PC-3 (cell line): ENCODE measurements at regions of chr11 and their contacts with region 1.

Region 1: GRCh38 chr11:64916775-64917662 is at the start of gene ATG2A:
- DNase-seq: peak; percentile 100
- ATAC-seq: peak; percentile 97
- H3K4me3 ChIP-seq: peak within 1 kb of the TSS; percentile 89
- H3K27ac ChIP-seq: peak within 1 kb of the TSS; percentile 9
- H3K4me1 ChIP-seq: peaks cover 15% of the 10 kb centered on the region
- H3K27me3 ChIP-seq: no peaks in the 10 kb centered on the region
- CTCF ChIP-seq: no peak
- total RNA-seq, gene ATG2A: 45.6 and 51.4 TPM in 2 replicates

Region 2: GRCh38 chr11:64935359-64936081 is 18.5 kb after region 1 on chr11 and contains the start of gene GPHA2:
- CTCF ChIA-PET with region 1: no interaction called
- POLR2A ChIA-PET with region 1: no interaction called
- intact Hi-C with region 1: no loop called
- DNase-seq: peak; percentile 15
- ATAC-seq: peak; percentile 31; the same call in 1 of the 2 replicates
- H3K4me3 ChIP-seq: no peak within 1 kb of the TSS
- H3K27ac ChIP-seq: no peak within 1 kb of the TSS
- H3K4me1 ChIP-seq: no peaks in the 10 kb centered on the region
- H3K27me3 ChIP-seq: no peaks in the 10 kb centered on the region
- CTCF ChIP-seq: no peak
- total RNA-seq, gene GPHA2: not detected in 2 replicates

Region 3: DNA sequence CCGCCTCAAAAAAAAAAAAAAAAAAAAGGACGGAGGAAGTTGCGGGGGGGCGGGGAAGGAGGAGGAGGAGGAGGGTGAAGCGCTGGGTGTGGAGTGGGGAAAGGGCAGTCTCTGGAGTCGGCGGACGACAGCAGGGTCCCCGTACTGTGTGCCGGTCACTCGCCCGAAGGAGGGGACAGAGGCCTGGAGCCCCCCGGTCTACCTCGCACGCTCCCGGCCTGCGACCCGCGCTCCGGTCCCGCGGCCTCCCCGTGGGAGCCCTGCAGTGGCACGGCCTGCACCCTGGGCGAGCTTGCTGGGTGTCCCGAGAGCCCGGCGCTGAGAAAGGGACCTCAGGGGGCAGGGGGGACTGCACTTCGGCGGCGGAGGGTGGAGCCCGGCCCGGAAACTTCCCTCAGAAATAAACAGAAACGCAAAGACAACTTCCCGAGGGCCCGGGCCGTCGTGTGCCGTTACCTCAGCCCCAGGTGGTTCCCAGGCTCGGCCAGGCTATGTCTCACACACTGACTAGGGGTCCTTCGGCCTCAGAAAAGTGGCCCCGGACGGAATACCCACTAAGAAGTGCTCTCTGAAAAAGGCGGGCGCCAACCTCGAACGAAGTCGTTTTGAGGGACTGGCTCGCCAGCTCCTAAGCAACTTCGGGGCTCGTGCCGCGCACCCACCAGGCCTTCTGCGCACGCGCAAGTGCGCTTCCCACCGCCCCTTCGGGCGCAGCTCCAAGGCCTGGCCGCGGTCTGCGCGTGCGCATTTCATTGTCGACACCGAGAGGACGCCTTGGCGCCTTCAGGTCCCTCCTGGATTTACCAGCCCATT is 54.6 kb after region 1 on chr11 and contains the start of gene MAJIN:
- CTCF ChIA-PET with region 1: no interaction called
- POLR2A ChIA-PET with region 1: no interaction called
- intact Hi-C with region 1: loop called (anchors 5 kb)
- DNase-seq: peak; percentile 30
- ATAC-seq: no peak
- H3K4me3 ChIP-seq: no peak within 1 kb of the TSS
- H3K27ac ChIP-seq: peak within 1 kb of the TSS; percentile 44
- H3K4me1 ChIP-seq: peaks cover 24% of the 10 kb centered on the region
- H3K27me3 ChIP-seq: no peaks in the 10 kb centered on the region
- CTCF ChIP-seq: no peak
- total RNA-seq, gene MAJIN: not detected in 2 replicates

Region 4: GRCh38 chr11:65003282-65003681 is 86.3 kb after region 1 on chr11:
- CTCF ChIA-PET with region 1: no interaction called
- POLR2A ChIA-PET with region 1: no interaction called
- intact Hi-C with region 1: loop called (anchors 2 kb)
- DNase-seq: peak; percentile 33
- ATAC-seq: no peak
- H3K4me3 ChIP-seq: no peak overlapping the region
- H3K27ac ChIP-seq: no peak overlapping the region
- H3K4me1 ChIP-seq: peaks cover 14% of the 10 kb centered on the region
- H3K27me3 ChIP-seq: no peaks in the 10 kb centered on the region
- CTCF ChIP-seq: no peak

Region 5: GRCh38 chr11:65013692-65014145 is 96.7 kb after region 1 on chr11:
- CTCF ChIA-PET with region 1: no interaction called
- POLR2A ChIA-PET with region 1: no interaction called
- intact Hi-C with region 1: loop called (anchors 1 kb)
- DNase-seq: peak; percentile 89
- ATAC-seq: peak; percentile 84
- H3K4me3 ChIP-seq: peak overlapping the region; percentile 74
- H3K27ac ChIP-seq: peak overlapping the region; percentile 72
- H3K4me1 ChIP-seq: peaks cover 14% of the 10 kb centered on the region
- H3K27me3 ChIP-seq: no peaks in the 10 kb centered on the region
- CTCF ChIP-seq: peak; percentile 58

Region 6: DNA sequence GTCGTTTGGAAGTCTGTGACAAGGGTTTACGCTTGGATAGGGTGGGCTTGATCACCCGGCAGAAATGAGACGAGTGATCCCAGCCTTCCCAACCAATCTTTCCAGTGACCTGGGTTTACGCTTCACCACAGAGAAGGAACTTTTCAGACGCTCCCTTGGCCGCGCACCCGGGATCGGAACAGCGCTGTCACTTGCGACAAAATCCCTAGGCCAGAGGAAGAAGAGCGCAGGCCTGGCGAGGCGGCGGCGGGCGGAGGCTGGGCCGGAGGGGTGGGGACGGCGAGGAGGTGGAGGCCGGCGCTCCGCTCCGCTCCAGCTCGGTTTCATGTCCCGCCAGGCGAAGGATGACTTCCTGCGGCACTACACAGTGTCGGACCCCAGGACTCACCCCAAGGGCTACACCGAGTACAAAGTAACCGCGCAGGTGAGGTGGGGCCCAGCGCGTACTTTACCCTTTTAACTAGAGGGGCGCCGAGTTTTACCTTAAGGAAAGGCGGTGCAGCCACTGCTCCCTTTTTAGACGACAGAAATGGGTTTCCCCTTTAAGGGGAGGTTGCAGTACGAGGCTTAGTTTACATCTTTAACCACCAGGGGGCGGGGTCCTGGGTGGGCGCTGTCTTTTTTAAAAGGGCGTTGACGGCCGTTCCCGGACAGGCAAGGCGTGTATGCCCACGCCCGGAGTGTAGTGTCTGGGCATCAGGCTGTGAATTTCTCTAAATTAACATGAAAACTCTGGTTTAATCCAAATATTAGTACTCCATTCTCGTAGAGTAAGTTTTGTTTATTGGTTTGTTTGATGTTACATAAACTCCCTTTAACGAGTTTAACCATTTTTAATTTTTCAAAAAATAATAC is 110.4 kb after region 1 on chr11 and contains the start of gene SNX15:
- CTCF ChIA-PET with region 1: no interaction called
- POLR2A ChIA-PET with region 1: interaction called, 3 read pairs
- intact Hi-C with region 1: loop called (anchors 1 kb)
- DNase-seq: peak; percentile 99
- ATAC-seq: peak; percentile 95
- H3K4me3 ChIP-seq: peak within 1 kb of the TSS; percentile 67
- H3K27ac ChIP-seq: peak within 1 kb of the TSS; percentile 66
- H3K4me1 ChIP-seq: peaks cover 10% of the 10 kb centered on the region
- H3K27me3 ChIP-seq: no peaks in the 10 kb centered on the region
- CTCF ChIP-seq: peak; percentile 56
- total RNA-seq, gene SNX15: 15.1 and 40.4 TPM in 2 replicates

Region 7: DNA sequence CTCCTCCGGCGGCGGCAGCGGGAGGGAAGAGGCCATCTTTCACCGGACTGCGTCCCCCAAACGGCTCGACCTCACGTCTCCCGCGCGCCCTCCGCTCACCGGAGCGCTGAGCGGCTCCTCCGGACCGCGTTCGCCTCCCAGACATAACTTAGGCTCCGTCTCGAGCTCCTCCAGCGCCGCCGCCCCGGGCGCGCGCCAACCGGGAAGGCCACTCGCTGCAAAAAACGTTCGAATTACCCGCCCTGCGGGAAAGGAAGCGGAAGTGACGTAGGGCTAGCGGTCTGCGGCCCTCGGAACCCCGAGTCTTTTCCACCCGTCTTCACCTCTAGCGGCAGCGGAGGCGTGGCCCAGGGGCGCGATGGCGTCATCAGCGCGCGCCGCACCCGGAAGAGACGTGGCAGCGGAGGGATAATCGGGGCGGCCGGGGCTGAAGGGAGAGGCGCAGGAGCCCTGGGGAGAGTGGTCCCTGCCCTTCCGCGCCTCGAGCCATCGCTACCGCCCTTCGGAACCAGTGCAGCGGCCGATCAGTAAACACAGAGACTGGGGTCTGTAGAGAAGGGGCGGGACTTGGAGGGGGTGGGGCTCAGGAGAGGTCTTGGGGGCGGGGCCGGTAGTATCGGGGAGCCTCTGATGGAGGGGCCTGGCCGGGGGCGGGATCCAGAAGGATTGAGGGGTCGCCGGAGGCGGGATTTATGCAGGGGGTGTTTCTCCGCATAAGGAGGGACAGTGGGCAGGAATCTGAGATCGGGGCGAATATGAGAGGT is 167.0 kb after region 1 on chr11 and contains the starts of genes CDCA5 and ZFPL1:
- CTCF ChIA-PET with region 1: no interaction called
- POLR2A ChIA-PET with region 1: no interaction called
- intact Hi-C with region 1: loop called (anchors 2 kb)
- DNase-seq: peak; percentile 98
- ATAC-seq: peak; percentile 92
- H3K4me3 ChIP-seq: peak within 1 kb of the TSS; percentile 89
- H3K27ac ChIP-seq: peak within 1 kb of the TSS; percentile 63
- H3K4me1 ChIP-seq: peaks cover 21% of the 10 kb centered on the region
- H3K27me3 ChIP-seq: no peaks in the 10 kb centered on the region
- CTCF ChIP-seq: no peak
- total RNA-seq, gene CDCA5: 67.1 and 73.4 TPM in 2 replicates
- total RNA-seq, gene ZFPL1: 98.7 and 103 TPM in 2 replicates